BJ (cell line): ENCODE measurements at regions of chr19 and their contacts with region 1.

Region 1: GRCh38 chr19:18521885-18522624 is at the start of gene ELL:
- DNase-seq: peak; percentile 100
- H3K4me3 ChIP-seq: peak within 1 kb of the TSS; percentile 100
- H3K27me3 ChIP-seq: no peaks in the 10 kb centered on the region
- CTCF ChIP-seq: peak; percentile 36
- polyA plus RNA-seq, gene ELL: 4.4 and 10.2 TPM in 2 replicates

Region 2: GRCh38 chr19:18469069-18469846 is 52.8 kb before region 1 on chr19:
- CTCF ChIA-PET with region 1: interaction called, 13 read pairs
- POLR2A ChIA-PET with region 1: no interaction called
- DNase-seq: no peak
- H3K4me3 ChIP-seq: no peak overlapping the region
- H3K27me3 ChIP-seq: no peaks in the 10 kb centered on the region
- CTCF ChIP-seq: peak; percentile 85

Region 3: GRCh38 chr19:18532168-18532890 is 10.3 kb after region 1 on chr19:
- CTCF ChIA-PET with region 1: no interaction called
- POLR2A ChIA-PET with region 1: no interaction called
- DNase-seq: no peak
- H3K4me3 ChIP-seq: no peak overlapping the region
- H3K27me3 ChIP-seq: no peaks in the 10 kb centered on the region
- CTCF ChIP-seq: no peak

Region 4: GRCh38 chr19:18612772-18613588 is 90.9 kb after region 1 on chr19 and contains the start of gene TMEM59L:
- CTCF ChIA-PET with region 1: no interaction called
- POLR2A ChIA-PET with region 1: no interaction called
- DNase-seq: no peak
- H3K4me3 ChIP-seq: peak within 1 kb of the TSS; percentile 40
- H3K27me3 ChIP-seq: peaks cover 47% of the 10 kb centered on the region
- CTCF ChIP-seq: no peak
- polyA plus RNA-seq, gene TMEM59L: 0.69 and 1.6 TPM in 2 replicates